ACHN (cell line): ENCODE measurements at regions of chr1 and their contacts with region 1.

Region 1: GRCh38 chr1:3649342-3650247 is at the start of gene WRAP73:
- DNase-seq: peak; percentile 89

Region 2: GRCh38 chr1:3530926-3531818 is 118.4 kb before region 1 on chr1:
- in situ Hi-C with region 1: loop called (anchors 25 kb)
- DNase-seq: peak; percentile 79